CD4-positive, alpha-beta memory T cell (primary cell): ENCODE measurements at regions of chr6 and their contacts with region 1.

Region 1: GRCh38 chr6:41531591-41532582 is 14.3 kb upstream of the FOXP4 start:
- DNase-seq: peak; percentile 54 to 70 (median 60)
- H3K4me3 ChIP-seq: peak overlapping the region; percentile 39 to 60
- H3K4me3 Mint-ChIP-seq: peak overlapping the region; percentile 75 to 88 (median 84)
- H3K27ac ChIP-seq: no peak overlapping the region
- H3K27ac Mint-ChIP-seq: peak overlapping the region; percentile 60 to 95 (median 82)
- H3K4me1 ChIP-seq: peaks cover 29% of the 10 kb centered on the region
- H3K4me1 Mint-ChIP-seq: peaks cover 18 to 46% (median 33%) of the 10 kb centered on the region in 4 donors
- H3K27me3 ChIP-seq: no peaks in the 10 kb centered on the region
- H3K27me3 Mint-ChIP-seq: no peaks in the 10 kb centered on the region

Region 2: DNA sequence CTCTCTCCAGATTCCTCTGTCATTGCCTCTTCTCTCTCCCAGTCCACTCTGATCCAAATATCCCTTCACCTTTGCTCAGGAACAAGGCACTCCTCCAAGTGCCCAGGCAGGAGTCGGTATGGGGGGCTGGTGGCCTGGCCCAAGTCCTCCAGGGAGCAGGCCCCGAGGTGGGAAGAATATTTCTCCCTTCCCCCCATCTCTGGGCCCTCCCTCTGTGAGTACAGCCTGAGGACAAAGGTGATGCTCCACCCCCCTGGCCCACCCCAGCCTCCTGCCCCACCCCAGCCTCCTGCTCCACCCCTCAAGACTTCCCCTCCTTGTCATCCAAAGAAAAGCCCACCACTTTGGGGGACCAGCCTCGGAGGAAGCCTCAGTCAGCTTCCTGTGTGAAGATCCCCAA is 99.6 kb before region 1 on chr6:
- CTCF ChIA-PET with region 1: no interaction called
- POLR2A ChIA-PET with region 1: no interaction called
- intact Hi-C with region 1: no loop called
- DNase-seq: no peak
- H3K4me3 ChIP-seq: no peak overlapping the region
- H3K4me3 Mint-ChIP-seq: peak overlapping the region in 1 of 8 donors; percentile 34
- H3K27ac ChIP-seq: no peak overlapping the region
- H3K27ac Mint-ChIP-seq: no peak overlapping the region
- H3K4me1 ChIP-seq: peaks cover 12% of the 10 kb centered on the region
- H3K4me1 Mint-ChIP-seq: peaks cover 9 to 18% (median 12%) of the 10 kb centered on the region in 4 donors
- H3K27me3 ChIP-seq: peaks cover 10% of the 10 kb centered on the region
- H3K27me3 Mint-ChIP-seq: peaks cover 18 to 23% of the 10 kb centered on the region in 2 donors

Region 3: DNA sequence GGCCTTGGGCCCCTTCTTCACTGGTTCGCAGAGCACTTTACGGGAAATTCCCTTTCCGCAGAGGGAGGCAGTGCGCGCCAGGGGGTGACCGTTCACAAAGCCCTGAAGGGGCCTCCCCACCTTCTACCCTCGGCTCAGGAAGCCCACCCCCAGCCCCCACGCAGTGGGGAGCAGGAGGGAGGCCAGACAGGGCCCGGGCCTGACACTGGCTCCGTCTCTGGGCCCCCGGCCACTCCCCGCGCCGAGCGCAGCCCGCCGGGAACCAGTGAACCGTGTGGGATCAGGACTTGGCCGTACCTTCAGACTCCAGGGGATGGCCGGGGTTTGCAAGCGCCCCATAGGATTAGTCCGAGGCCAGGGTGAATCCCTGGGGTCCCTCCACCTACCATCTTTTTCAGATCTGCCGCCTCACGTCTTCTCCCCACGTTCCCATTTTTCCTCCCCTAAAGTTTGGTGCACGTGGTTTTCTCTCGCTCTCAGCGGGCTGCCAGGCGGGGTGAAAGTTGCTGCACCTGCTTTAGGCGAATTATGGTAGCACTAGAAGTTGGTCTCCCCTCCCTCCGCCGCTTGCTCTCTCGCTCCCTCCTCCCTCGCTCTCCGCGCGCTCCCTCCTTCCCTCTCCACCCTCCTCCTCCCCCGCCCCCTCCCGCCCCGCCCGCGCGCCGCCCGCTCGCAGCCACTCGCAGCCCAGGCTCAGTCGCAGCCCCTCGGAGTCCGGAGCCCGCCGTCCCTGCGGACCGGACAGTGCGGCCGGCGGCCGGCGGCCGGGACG is 14.0 kb after region 1 on chr6 and contains the start of gene FOXP4:
- CTCF ChIA-PET with region 1: no interaction called
- POLR2A ChIA-PET with region 1: interaction called, 4 read pairs
- intact Hi-C with region 1: loop called (anchors 1 kb)
- DNase-seq: peak; percentile 80 to 87 (median 81)
- H3K4me3 ChIP-seq: peak within 1 kb of the TSS; percentile 75 to 76
- H3K4me3 Mint-ChIP-seq: peak within 1 kb of the TSS; percentile 90 to 96 (median 92)
- H3K27ac ChIP-seq: no peak within 1 kb of the TSS
- H3K27ac Mint-ChIP-seq: peak within 1 kb of the TSS; percentile 33 to 92 (median 72)
- H3K4me1 ChIP-seq: peaks cover 37% of the 10 kb centered on the region
- H3K4me1 Mint-ChIP-seq: peaks cover 11 to 42% (median 29%) of the 10 kb centered on the region in 4 donors
- H3K27me3 ChIP-seq: peaks cover 17% of the 10 kb centered on the region
- H3K27me3 Mint-ChIP-seq: peaks cover 0 to 2% of the 10 kb centered on the region in 2 donors
- total RNA-seq, gene FOXP4: 7.4 to 7.8 TPM

Region 4: GRCh38 chr6:42028234-42029061 is 496.6 kb after region 1 on chr6:
- CTCF ChIA-PET with region 1: no interaction called
- POLR2A ChIA-PET with region 1: no interaction called
- intact Hi-C with region 1: no loop called
- DNase-seq: no peak
- H3K4me3 ChIP-seq: no peak overlapping the region
- H3K4me3 Mint-ChIP-seq: peak overlapping the region in 7 of 8 donors; percentile 64 to 81 (median 76)
- H3K27ac ChIP-seq: peak overlapping the region; percentile 62
- H3K27ac Mint-ChIP-seq: peak overlapping the region; percentile 92 to 95 (median 93)
- H3K4me1 ChIP-seq: peaks cover 98% of the 10 kb centered on the region
- H3K4me1 Mint-ChIP-seq: peaks cover 66 to 97% (median 80%) of the 10 kb centered on the region in 4 donors
- H3K27me3 ChIP-seq: no peaks in the 10 kb centered on the region
- H3K27me3 Mint-ChIP-seq: no peaks in the 10 kb centered on the region